ENCODE measurements at regions of chr7 and their contacts with region 1.

Region 1: DNA sequence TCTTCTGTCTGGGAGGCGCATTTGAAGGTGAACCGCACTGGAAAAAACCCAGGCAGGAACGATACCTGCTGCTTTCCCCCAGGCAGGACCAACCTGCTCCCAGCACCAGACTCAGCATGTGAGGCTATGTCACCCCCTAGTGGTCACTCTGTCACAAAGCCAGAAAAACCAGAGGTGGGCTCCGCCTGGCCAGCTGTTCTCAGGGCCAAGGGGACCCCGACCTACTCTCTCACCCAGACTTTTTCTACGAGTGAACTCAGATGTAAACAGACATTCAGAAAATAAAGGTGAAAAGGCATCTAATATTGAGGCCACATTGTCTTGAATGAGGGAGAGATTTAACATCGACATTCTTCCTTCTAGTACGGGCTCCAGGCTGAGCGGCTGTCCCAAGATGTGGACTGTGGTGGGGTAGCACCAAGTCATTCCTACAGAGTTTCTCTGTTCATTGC is 117.3 kb downstream of the PRKAG2 start:
- DNase-seq: peak; percentile 28
- H3K4me3 Mint-ChIP-seq: no peak overlapping the region
- H3K27ac Mint-ChIP-seq: no peak overlapping the region
- H3K4me1 Mint-ChIP-seq: peaks cover 15% of the 10 kb centered on the region
- H3K27me3 Mint-ChIP-seq: peaks cover 2% of the 10 kb centered on the region

Region 2: GRCh38 chr7:151368136-151368571 is 391.5 kb before region 1 on chr7:
- intact Hi-C with region 1: loop called (anchors 1 kb)
- DNase-seq: peak; percentile 64
- H3K4me3 Mint-ChIP-seq: no peak overlapping the region
- H3K27ac Mint-ChIP-seq: no peak overlapping the region
- H3K4me1 Mint-ChIP-seq: peaks cover 4% of the 10 kb centered on the region
- H3K27me3 Mint-ChIP-seq: no peaks in the 10 kb centered on the region

Region 3: DNA sequence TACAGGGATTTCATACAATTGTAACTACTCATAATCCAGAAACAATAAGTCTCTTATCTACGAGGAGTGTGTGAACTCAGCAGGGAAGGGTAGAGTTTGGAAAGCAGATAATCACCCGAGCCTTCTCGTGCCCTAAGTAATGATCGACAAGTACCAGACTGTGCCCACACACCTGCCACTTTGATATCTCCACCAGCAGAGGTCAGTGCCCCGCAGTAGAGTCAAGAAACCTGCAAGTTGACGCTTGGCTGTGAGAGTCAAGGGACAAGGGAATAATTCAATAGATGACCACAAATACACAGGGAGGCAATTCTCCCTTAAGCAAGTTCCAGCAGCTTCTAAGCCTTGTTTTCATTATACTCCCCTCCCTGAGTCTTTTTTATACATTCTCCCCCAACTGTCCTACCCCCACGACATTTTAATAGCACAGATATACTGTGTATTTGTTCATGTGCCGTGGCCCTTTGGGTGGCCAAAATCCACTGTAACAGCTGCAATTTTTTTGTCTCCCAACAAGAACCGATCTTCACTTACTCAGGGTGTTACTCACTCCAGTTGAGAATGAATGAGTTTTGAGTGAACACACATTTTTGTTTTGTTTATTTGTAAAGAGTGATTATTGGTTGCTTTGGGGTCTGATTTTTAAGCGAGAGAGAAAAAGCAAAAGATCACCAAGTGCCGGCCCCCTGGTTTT is 133.0 kb before region 1 on chr7:
- intact Hi-C with region 1: loop called (anchors 2 kb)
- DNase-seq: no peak
- H3K4me3 Mint-ChIP-seq: no peak overlapping the region
- H3K27ac Mint-ChIP-seq: no peak overlapping the region
- H3K4me1 Mint-ChIP-seq: peaks cover 19% of the 10 kb centered on the region
- H3K27me3 Mint-ChIP-seq: no peaks in the 10 kb centered on the region

Measured in activated T-helper 2 cell treated with anti-CD3 and anti-CD28 coated beads, Interferon-gamma antibody, Interleukin-2, Interleukin-4, amounts not matched to agents 10 μg/mL and 5 μg/mL and 100 μg/mL, durations not matched to agents 14 hours and 24 hours and 36 hours (primary cell).